Calu3 (cell line): ENCODE measurements at regions of chr1 and their contacts with region 1.

Region 1: DNA sequence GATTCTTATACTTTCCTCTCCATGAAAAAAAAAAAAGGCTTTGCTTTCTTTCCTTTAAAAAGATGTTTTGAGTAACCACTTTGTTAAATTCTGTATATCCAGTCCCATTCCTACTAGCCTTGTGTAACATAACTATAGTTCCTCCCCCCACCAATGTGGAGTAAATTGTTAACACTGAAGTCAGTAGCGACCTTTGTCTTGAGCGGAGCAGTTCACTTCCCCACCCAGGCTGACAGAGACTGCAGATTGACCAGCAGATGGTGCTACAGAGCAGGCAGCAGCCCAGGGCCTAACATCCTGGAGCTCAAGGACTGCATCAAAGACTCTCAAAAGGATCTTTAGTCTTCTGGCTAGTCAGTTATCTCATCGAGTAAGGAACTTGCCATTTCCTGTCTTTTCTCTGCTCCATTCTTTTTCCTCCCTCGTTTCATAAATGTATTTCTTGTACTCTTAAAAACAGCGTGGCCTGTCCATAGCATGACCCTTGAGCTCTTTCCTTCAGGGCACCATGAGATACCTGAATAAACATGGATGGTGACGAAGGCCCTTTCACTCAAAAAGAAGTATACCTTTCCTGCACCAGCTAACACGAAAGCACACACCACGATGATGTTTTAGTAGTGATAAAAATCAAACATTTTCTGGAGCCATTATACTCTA is 503.5 kb upstream of the PKN2 start:
- DNase-seq: peak; percentile 85
- H3K4me3 Mint-ChIP-seq: no peak overlapping the region
- H3K27ac Mint-ChIP-seq: peak overlapping the region; percentile 12
- H3K4me1 Mint-ChIP-seq: peaks cover 38% of the 10 kb centered on the region
- H3K27me3 Mint-ChIP-seq: no peaks in the 10 kb centered on the region
- CTCF ChIP-seq: peak; percentile 91

Region 2: GRCh38 chr1:87328272-87329050 is 852.1 kb before region 1 on chr1 and contains the start of gene LMO4:
- CTCF ChIA-PET with region 1: interaction called, 3 read pairs
- intact Hi-C with region 1: loop called (anchors 5 kb)
- DNase-seq: peak; percentile 95
- H3K4me3 Mint-ChIP-seq: peak within 1 kb of the TSS; percentile 94
- H3K27ac Mint-ChIP-seq: peak within 1 kb of the TSS; percentile 90
- H3K4me1 Mint-ChIP-seq: peaks cover 20% of the 10 kb centered on the region
- H3K27me3 Mint-ChIP-seq: no peaks in the 10 kb centered on the region
- CTCF ChIP-seq: no peak
- total RNA-seq, gene LMO4: 95.0 and 132 TPM in 2 replicates

Region 3: DNA sequence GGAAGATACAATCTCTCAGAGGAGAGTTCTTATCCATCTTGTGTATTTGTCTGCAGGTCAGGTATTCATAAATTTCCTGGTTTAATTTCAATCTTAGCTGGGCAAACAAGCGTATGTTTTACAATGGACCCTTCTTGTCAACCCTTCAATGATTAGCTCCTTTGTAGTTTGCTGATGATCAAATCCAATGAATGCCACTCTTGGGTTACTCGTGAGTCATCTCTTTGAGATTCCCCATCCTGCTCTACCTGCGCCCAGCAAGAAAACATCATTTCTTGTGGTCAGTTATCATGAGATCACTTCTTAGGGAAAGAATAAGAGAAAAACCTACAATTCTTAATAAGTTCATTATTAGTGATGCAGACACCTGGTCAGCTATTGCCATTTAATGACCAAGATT is 68.8 kb before region 1 on chr1:
- CTCF ChIA-PET with region 1: interaction called, 7 read pairs
- intact Hi-C with region 1: loop called (anchors 2 kb)
- DNase-seq: peak; percentile 50
- H3K4me3 Mint-ChIP-seq: peak overlapping the region; percentile 12
- H3K27ac Mint-ChIP-seq: peak overlapping the region; percentile 59
- H3K4me1 Mint-ChIP-seq: peaks cover 42% of the 10 kb centered on the region
- H3K27me3 Mint-ChIP-seq: no peaks in the 10 kb centered on the region
- CTCF ChIP-seq: no peak

Region 4: GRCh38 chr1:88239205-88239604 is 58.6 kb after region 1 on chr1:
- CTCF ChIA-PET with region 1: interaction called, 14 read pairs
- intact Hi-C with region 1: loop called (anchors 1 kb)
- DNase-seq: no peak
- H3K4me3 Mint-ChIP-seq: no peak overlapping the region
- H3K27ac Mint-ChIP-seq: no peak overlapping the region
- H3K4me1 Mint-ChIP-seq: no peaks in the 10 kb centered on the region
- H3K27me3 Mint-ChIP-seq: no peaks in the 10 kb centered on the region
- CTCF ChIP-seq: no peak